ENCODE measurements at regions of chr19 and their contacts with region 1.

Region 1: DNA sequence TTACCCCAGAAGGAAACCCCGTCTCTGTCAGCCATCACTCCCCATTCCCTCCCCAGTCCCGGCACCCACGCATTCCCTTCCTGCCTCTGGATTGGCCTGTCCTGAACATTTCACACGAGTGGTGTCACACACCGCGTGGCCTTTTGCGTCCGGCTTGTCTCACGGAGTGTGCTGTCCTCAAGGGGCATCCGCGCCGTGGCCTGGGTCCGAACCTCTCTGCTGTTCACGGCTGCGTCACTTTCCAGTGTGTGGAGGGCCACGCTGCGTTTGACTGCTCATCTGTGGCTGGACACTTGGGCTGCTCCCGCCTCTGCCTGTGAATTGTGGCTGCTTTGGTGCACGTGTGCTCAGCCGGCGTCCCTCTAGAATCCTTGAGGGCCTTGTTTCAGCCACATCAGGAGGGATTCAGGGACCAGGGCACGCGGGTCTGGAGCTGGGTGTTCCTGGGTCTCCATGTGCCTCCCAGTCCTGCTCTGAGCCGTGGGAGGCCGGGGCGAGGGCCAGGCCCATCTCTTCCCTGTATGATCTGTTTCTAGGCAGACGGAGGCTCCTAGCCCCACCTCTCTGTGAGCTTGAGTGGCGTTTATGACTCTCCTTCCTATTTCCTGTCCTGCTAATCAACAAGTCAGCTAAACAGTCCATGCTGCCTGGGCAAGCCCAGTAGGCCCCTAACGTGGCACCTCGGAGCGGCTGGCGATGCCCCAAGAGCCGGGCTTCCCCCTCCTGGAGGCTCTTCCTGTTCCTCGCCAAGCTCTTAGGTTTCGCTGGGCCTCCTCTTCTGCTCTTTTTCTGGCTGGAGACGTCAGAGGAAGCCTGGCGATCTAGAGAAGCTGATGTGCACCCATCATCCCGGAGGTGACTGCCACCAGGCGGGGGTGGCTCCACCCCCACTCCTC is 8.1 kb downstream of the STK11 start:
- DNase-seq: no peak
- H3K4me3 ChIP-seq: no peak overlapping the region
- H3K27ac ChIP-seq: peak overlapping the region; percentile 50
- H3K4me1 ChIP-seq: peaks cover 0 to 13% (median 7%) of the 10 kb centered on the region in 4 experiments; a peak in 4 of 7 replicates
- H3K27me3 ChIP-seq: no peaks in the 10 kb centered on the region
- CTCF ChIP-seq: no peak
- EP300 ChIP-seq: no peak
- POLR2A ChIP-seq: no peak
- RAD21 ChIP-seq: no peak

Region 2: GRCh38 chr19:1241417-1242095 is 27.9 kb after region 1 on chr19 and contains the start of gene ATP5F1D:
- CTCF ChIA-PET with region 1: interaction called, 56 read pairs
- POLR2A ChIA-PET with region 1: interaction called, 7 read pairs
- DNase-seq: peak in 1 of 2 experiments; percentile 94
- H3K4me3 ChIP-seq: peak within 1 kb of the TSS; percentile 65 to 95 (median 67)
- H3K27ac ChIP-seq: no peak within 1 kb of the TSS
- H3K4me1 ChIP-seq: peaks cover 0 to 26% (median 10%) of the 10 kb centered on the region in 4 experiments; a peak in 5 of 7 replicates
- H3K27me3 ChIP-seq: no peaks in the 10 kb centered on the region
- CTCF ChIP-seq: no peak
- EP300 ChIP-seq: no peak
- POLR2A ChIP-seq: no peak
- RAD21 ChIP-seq: no peak
- total RNA-seq, gene ATP5F1D: 174 and 182 TPM in 2 replicates

Measured in H1 (cell line).